Activated CD8-positive, alpha-beta T cell treated with anti-CD3 and anti-CD28 coated beads for 36 hours (primary cell): ENCODE measurements at regions of chr2 and their contacts with region 1.

Region 1: GRCh38 chr2:148989882-148990493 is 48.5 kb upstream of the LYPD6B start:
- DNase-seq: peak; percentile 72
- ATAC-seq: peak; percentile 92
- H3K4me3 Mint-ChIP-seq: no peak overlapping the region
- H3K27ac Mint-ChIP-seq: no peak overlapping the region
- H3K4me1 Mint-ChIP-seq: peaks cover 2% of the 10 kb centered on the region
- H3K27me3 Mint-ChIP-seq: peaks cover 1% of the 10 kb centered on the region
- CTCF ChIP-seq: peak; percentile 74

Region 2: DNA sequence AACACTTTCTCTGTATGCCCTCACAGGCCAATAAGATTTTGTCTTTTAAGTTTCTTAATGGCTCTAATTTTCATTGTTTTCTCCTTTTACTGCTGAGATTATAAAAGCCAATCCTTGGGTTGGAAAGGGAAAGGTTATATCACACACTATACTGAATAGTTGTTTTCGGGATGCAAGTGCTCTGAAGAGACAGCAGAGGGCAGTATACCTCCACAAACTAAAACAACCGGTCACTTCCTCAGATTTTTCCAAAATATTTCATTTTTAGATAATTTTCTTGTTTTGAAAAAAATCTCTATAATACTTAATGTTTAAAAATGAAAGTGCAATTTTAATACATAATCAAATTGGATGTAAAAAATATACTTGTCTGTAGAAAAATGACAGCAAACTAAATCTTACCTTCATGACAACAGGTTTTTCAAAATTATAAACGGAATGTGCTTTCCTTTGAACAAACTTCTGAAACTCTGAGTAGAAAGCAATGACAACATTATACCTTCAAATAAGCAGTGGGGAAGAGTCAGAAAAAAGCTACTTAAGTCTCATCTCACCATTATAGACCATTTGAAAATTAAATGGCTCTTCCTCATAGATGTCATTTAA is 1052.1 kb before region 1 on chr2:
- CTCF ChIA-PET with region 1: no interaction called
- POLR2A ChIA-PET with region 1: no interaction called
- intact Hi-C with region 1: loop called (anchors 5 kb)
- DNase-seq: no peak
- ATAC-seq: peak; percentile 47
- H3K4me3 Mint-ChIP-seq: no peak overlapping the region
- H3K27ac Mint-ChIP-seq: no peak overlapping the region
- H3K4me1 Mint-ChIP-seq: no peaks in the 10 kb centered on the region
- H3K27me3 Mint-ChIP-seq: no peaks in the 10 kb centered on the region
- CTCF ChIP-seq: peak; percentile 97

Region 3: DNA sequence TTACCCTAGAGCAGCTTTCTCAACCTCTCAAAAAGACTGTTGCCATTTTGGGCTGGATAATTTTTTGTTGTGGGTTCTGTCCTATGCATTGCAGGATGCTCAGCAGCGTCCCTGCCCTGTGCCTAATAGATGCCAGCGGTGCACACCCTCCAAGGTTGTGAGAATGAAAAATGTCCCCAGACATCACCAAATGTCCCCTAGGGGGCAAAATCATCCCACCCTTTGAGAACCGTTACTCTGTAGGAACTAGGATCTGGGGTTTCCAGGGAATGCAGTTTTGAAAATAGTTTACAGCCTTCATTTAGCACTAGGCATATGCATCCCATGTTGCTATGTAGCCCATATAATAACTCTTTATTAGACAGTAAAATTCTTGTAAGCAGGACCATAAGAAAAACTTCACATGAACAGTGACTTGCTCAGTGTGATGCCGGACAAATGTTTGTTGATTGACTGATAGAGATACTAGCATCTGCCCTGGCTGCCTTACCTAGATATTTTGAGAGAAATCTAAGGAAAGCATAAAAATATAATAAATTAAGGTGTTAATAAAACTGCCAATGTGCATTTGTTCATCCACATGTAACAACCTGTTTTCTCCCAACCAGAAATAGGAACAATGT is 424.6 kb before region 1 on chr2:
- CTCF ChIA-PET with region 1: no interaction called
- POLR2A ChIA-PET with region 1: no interaction called
- intact Hi-C with region 1: loop called (anchors 10 kb)
- DNase-seq: no peak
- ATAC-seq: no peak
- H3K4me3 Mint-ChIP-seq: no peak overlapping the region
- H3K27ac Mint-ChIP-seq: no peak overlapping the region
- H3K4me1 Mint-ChIP-seq: peaks cover 20% of the 10 kb centered on the region
- H3K27me3 Mint-ChIP-seq: no peaks in the 10 kb centered on the region
- CTCF ChIP-seq: peak; percentile 2

Region 4: DNA sequence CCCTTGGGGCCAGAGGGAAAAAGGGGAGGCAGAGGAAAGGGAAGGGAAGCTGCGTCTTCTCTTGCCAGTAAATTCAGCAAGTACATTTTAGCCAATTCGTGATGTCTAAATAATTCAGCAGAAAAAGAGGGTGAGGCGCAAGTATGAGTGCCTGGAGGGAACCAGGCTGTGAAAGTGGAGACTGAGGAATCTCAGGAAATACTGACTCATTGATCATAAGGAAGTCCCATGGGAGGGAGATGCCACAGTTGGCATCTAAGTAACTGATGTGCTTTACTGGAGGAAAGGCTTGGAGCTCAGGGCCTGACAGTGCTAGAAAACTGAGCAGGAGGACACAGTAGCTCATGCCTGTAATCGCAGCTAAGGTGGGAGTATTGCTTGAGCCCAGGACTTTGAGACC is 83.9 kb before region 1 on chr2:
- CTCF ChIA-PET with region 1: no interaction called
- POLR2A ChIA-PET with region 1: no interaction called
- intact Hi-C with region 1: no loop called
- DNase-seq: no peak
- ATAC-seq: no peak
- H3K4me3 Mint-ChIP-seq: no peak overlapping the region
- H3K27ac Mint-ChIP-seq: no peak overlapping the region
- H3K4me1 Mint-ChIP-seq: no peaks in the 10 kb centered on the region
- H3K27me3 Mint-ChIP-seq: peaks cover 2% of the 10 kb centered on the region
- CTCF ChIP-seq: no peak

Region 5: DNA sequence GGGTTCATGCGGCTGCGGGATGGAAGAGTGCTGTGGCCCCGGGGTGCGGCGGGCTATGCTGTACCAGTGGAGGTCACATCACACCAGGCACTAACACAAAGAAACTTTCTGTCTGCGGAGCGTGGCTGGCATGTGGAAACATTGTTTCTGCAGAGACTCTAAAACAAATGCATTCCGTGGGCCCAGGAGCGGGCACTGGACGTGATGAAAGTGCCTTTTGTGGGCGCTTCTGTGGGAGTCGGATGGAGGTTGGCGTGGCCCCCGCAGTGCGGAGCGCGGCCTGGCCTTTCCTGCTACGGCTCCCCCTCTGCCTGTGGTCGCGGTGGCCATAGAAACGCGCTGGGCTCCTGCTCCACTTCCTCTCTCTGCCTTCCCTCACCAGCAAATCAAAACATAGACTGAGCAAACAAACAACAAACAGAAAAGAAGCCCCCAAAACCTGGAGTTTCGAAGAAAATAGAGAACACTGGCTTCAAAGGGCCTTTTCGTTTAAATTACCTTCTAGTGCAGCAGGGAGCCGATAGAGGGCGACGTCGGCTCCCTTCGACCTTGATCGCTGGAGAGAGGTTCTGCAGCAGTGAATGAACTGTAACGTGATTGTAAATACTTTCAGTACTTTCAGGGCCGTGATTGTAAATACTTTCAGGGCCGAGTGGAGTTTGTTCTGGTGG is 63.6 kb before region 1 on chr2:
- CTCF ChIA-PET with region 1: interaction called, 10 read pairs
- POLR2A ChIA-PET with region 1: no interaction called
- intact Hi-C with region 1: no loop called
- DNase-seq: peak; percentile 68
- ATAC-seq: peak; percentile 88
- H3K4me3 Mint-ChIP-seq: peak overlapping the region; percentile 77
- H3K27ac Mint-ChIP-seq: peak overlapping the region; percentile 85
- H3K4me1 Mint-ChIP-seq: peaks cover 15% of the 10 kb centered on the region
- H3K27me3 Mint-ChIP-seq: no peaks in the 10 kb centered on the region
- CTCF ChIP-seq: peak; percentile 77

Region 6: GRCh38 chr2:149040451-149040850 is 50.5 kb after region 1 on chr2:
- CTCF ChIA-PET with region 1: no interaction called
- POLR2A ChIA-PET with region 1: no interaction called
- intact Hi-C with region 1: no loop called
- DNase-seq: peak; percentile 75
- ATAC-seq: no peak
- H3K4me3 Mint-ChIP-seq: no peak overlapping the region
- H3K27ac Mint-ChIP-seq: no peak overlapping the region
- H3K4me1 Mint-ChIP-seq: no peaks in the 10 kb centered on the region
- H3K27me3 Mint-ChIP-seq: peaks cover 49% of the 10 kb centered on the region
- CTCF ChIP-seq: peak; percentile 68